ENCODE measurements at regions of chr10 and their contacts with region 1.

Region 1: GRCh38 chr10:29998142-29998808 is 61.1 kb downstream of the JCAD start:
- DNase-seq: peak; percentile 45 to 81 (median 72)
- ATAC-seq: peak; percentile 86
- H3K4me3 ChIP-seq: no peak overlapping the region
- H3K4me3 Mint-ChIP-seq: no peak overlapping the region
- H3K27ac ChIP-seq: no peak overlapping the region
- H3K27ac Mint-ChIP-seq: peak overlapping the region in 1 of 9 donors; percentile 16
- H3K4me1 ChIP-seq: peaks cover 0 to 4% of the 10 kb centered on the region in 2 donors
- H3K4me1 Mint-ChIP-seq: peaks cover 5 to 16% (median 11%) of the 10 kb centered on the region in 7 donors
- H3K27me3 ChIP-seq: no peaks in the 10 kb centered on the region
- H3K27me3 Mint-ChIP-seq: peaks cover 55 to 79% (median 62%) of the 10 kb centered on the region in 5 donors

Region 2: GRCh38 chr10:29914986-29915785 is 83.1 kb before region 1 on chr10:
- CTCF ChIA-PET with region 1: no interaction called
- POLR2A ChIA-PET with region 1: no interaction called
- intact Hi-C with region 1: no loop called
- DNase-seq: no peak
- ATAC-seq: no peak
- H3K4me3 ChIP-seq: no peak overlapping the region
- H3K4me3 Mint-ChIP-seq: no peak overlapping the region
- H3K27ac ChIP-seq: no peak overlapping the region
- H3K27ac Mint-ChIP-seq: no peak overlapping the region
- H3K4me1 ChIP-seq: no peaks in the 10 kb centered on the region
- H3K4me1 Mint-ChIP-seq: peaks cover 0 to 2% (median 0%) of the 10 kb centered on the region in 7 donors
- H3K27me3 ChIP-seq: no peaks in the 10 kb centered on the region
- H3K27me3 Mint-ChIP-seq: peaks cover 3 to 24% (median 7%) of the 10 kb centered on the region in 5 donors

Region 3: DNA sequence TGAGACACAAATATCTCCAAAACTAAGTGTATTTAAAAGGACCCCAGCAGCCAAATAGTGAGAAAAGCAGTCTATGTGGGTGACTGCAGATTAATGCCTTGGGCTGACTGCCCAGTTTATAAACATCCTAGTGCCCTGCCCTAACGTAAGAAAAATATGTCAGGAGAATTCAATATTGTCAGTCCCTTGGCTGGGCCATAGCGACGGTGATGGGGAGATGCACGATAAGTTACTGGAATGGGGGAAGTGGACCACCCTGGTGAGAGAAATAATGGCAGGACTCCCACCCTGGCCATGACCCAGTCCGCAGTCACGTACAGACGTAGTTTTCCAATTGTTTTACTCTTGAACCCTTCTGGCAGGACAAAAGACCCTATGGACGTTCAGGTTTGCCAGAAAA is 13.1 kb after region 1 on chr10:
- CTCF ChIA-PET with region 1: interaction called, 19 read pairs
- POLR2A ChIA-PET with region 1: no interaction called
- intact Hi-C with region 1: no loop called
- DNase-seq: no peak
- ATAC-seq: no peak
- H3K4me3 ChIP-seq: no peak overlapping the region
- H3K4me3 Mint-ChIP-seq: no peak overlapping the region
- H3K27ac ChIP-seq: no peak overlapping the region
- H3K27ac Mint-ChIP-seq: no peak overlapping the region
- H3K4me1 ChIP-seq: no peaks in the 10 kb centered on the region
- H3K4me1 Mint-ChIP-seq: peaks cover 0 to 15% (median 0%) of the 10 kb centered on the region in 7 donors
- H3K27me3 ChIP-seq: no peaks in the 10 kb centered on the region
- H3K27me3 Mint-ChIP-seq: peaks cover 27 to 74% (median 56%) of the 10 kb centered on the region in 5 donors

Region 4: DNA sequence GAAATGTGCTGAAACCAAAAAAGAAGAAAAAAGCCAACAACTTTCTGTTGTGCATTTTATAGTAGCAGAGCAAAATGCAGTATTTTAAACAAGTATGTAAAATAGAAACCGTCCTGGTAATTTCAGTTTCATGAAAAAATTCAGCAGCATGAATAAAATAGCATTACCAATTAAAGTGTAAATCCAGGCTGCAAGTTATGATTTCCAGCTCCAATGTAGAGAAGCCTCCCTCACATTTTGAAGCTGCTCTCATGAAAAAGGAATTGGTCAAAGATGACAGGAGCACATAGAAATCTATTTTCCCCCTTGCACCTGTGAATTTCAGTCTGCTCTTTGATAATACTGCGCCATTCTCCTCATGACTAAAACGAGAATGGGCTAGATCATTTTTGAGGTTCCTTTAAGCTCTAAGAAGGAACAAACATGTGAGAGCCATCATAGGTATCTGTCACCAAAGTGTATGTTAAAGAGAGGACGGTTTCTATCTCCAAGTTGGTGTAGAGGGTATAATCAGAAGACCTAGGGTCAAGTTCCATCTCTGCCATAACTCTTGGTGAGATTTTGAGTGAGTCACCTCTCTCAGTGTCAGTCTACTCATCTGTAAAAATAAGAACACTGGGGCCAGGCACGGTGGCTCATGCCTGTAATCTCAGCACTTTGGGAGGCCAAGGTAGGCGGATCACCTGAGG is 243.3 kb after region 1 on chr10:
- CTCF ChIA-PET with region 1: interaction called, 6 read pairs
- POLR2A ChIA-PET with region 1: no interaction called
- intact Hi-C with region 1: loop called (anchors 1 kb)
- DNase-seq: no peak
- ATAC-seq: no peak
- H3K4me3 ChIP-seq: no peak overlapping the region
- H3K4me3 Mint-ChIP-seq: no peak overlapping the region
- H3K27ac ChIP-seq: no peak overlapping the region
- H3K27ac Mint-ChIP-seq: no peak overlapping the region
- H3K4me1 ChIP-seq: no peaks in the 10 kb centered on the region
- H3K4me1 Mint-ChIP-seq: peaks cover 0 to 8% (median 0%) of the 10 kb centered on the region in 7 donors
- H3K27me3 ChIP-seq: no peaks in the 10 kb centered on the region
- H3K27me3 Mint-ChIP-seq: peaks cover 0 to 20% (median 6%) of the 10 kb centered on the region in 5 donors

Region 5: DNA sequence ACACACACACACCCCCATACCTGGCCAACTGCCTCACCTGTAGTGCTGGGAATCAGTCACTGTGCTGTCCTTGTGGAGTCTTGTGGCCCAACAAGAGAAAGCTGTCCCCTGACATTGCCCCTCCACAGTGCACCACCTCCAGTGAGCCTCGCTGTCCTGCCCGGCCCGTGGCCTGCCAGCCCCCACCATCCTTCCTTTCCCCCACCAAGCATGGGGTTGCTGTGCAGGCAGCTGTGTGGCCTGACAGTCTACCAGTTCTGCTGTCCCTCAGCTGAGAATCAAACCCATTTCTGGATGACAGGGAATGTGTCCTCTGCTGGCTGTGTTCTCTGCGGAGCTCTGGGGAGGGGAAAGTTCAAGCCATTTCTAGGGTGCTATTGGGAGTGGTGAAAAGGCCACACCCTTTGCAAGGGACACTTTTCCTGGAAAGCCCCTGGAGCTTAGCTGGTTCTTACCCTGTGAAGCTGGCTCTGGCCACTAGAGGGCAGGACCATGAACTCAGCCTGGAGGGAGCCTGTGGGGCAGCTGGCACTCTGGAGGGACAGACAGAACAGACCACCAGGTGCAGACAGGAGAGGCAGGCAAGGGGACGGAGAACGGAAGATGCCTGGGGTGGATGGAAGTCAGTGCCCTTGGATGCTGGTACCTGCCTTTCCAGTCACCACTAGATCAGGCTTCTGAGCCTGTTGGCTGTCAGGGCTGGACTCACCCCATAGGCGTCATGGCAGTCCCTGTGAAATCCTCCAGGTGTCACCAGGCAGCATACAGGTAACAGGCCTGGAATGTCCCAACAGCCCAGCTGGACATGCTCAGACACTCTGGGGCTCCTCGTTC is 361.3 kb after region 1 on chr10:
- CTCF ChIA-PET with region 1: interaction called, 7 read pairs
- POLR2A ChIA-PET with region 1: interaction called, 6 read pairs
- intact Hi-C with region 1: loop called in 1 of 2 experiments (anchors 1 kb)
- DNase-seq: peak; percentile 15 to 68 (median 34)
- ATAC-seq: peak; percentile 90
- H3K4me3 ChIP-seq: no peak overlapping the region
- H3K4me3 Mint-ChIP-seq: no peak overlapping the region
- H3K27ac ChIP-seq: no peak overlapping the region
- H3K27ac Mint-ChIP-seq: peak overlapping the region in 1 of 9 donors; percentile 15
- H3K4me1 ChIP-seq: no peaks in the 10 kb centered on the region
- H3K4me1 Mint-ChIP-seq: peaks cover 0 to 6% (median 4%) of the 10 kb centered on the region in 7 donors
- H3K27me3 ChIP-seq: no peaks in the 10 kb centered on the region
- H3K27me3 Mint-ChIP-seq: peaks cover 0 to 20% (median 4%) of the 10 kb centered on the region in 5 donors

Region 6: DNA sequence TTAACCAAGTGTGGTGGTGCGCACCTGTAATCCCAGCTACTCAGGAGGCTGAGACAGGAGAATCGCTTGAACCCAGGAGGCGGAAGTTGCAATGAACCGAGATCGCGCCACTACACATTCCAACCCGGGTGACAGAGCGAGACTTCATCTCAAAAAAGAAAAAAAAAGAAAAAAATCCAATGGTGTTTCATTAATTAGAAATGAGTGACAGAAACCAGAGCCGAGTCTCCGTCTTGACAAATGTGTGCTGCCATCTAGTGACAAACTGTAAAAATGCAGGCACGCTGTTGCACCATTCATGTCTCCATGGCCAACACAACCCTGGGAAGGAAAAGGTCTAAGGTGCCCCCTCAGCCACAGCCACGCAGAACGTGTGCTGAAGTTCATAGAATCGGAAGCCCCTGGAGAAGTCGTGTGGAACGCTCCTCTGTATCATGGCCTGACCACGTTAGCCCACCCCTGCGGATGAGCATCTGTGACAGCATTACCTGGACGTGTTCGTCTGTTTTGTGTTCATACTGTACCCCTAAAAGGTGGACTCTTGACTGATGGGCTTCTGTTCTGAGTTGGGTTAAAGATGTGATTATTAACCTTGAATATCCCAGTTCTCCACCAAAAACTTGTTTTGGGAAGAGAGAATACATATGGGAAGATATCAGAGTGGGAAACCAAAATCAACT is 536.3 kb after region 1 on chr10:
- CTCF ChIA-PET with region 1: interaction called, 7 read pairs
- POLR2A ChIA-PET with region 1: no interaction called
- intact Hi-C with region 1: loop called in 1 of 2 experiments (anchors 1 kb)
- DNase-seq: peak; percentile 36 to 79 (median 72)
- ATAC-seq: peak; percentile 69
- H3K4me3 ChIP-seq: no peak overlapping the region
- H3K4me3 Mint-ChIP-seq: no peak overlapping the region
- H3K27ac ChIP-seq: no peak overlapping the region
- H3K27ac Mint-ChIP-seq: peak overlapping the region in 2 of 9 donors; percentile 2 to 23
- H3K4me1 ChIP-seq: peaks cover 7 to 21% of the 10 kb centered on the region in 2 donors
- H3K4me1 Mint-ChIP-seq: peaks cover 8 to 39% (median 12%) of the 10 kb centered on the region in 7 donors
- H3K27me3 ChIP-seq: no peaks in the 10 kb centered on the region
- H3K27me3 Mint-ChIP-seq: peaks cover 0 to 16% (median 0%) of the 10 kb centered on the region in 5 donors